Activated CD8-positive, alpha-beta memory T cell treated with anti-CD3 and anti-CD28 coated beads, Interleukin-2, amount 10 ng/mL, durations not matched to agents 7 days and 5 days (primary cell): ENCODE measurements at regions of chr2 and their contacts with region 1.

Region 1: DNA sequence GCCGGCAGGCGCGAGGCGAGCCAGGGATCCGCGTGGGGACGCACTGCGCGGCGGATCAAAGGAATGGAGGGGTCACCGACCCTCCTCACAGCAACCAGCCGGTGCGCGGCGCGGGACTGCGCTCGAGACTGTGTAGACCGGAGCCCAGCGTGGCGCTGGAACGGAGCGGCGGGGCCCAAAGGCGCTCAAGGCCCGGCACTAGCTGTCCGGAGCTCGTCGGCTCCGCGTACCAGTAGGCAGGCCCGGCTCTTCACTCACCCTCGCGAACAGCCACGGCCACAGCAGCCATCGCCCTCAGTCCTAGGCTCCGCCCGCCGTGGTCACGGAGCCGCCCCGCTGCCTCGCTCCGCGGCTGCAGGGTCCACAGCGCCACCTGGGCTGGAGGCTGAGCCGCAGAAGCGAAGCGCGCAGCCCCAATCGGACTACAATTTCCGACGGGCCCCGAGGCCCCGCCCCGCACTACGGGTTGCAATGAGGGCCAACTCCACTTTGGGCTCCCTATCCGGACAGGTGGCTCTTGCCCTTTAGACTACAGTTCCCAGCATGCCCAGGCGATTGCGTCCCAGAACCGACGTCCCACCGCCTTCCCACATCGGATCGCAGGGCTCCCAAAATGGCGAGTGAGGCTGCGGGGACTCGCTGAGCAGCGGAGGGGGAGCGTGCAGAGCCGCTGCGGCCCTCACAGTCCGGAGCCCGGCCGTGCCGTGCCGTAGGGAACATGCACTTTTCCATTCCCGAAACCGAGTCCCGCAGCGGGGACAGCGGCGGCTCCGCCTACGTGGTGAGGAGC is at the starts of genes EIF2B4 and SNX17:
- DNase-seq: peak; percentile 100
- ATAC-seq: peak; percentile 93
- H3K4me3 Mint-ChIP-seq: peak within 1 kb of the TSS; percentile 84
- H3K27ac Mint-ChIP-seq: peak within 1 kb of the TSS; percentile 96
- H3K4me1 Mint-ChIP-seq: peaks cover 37% of the 10 kb centered on the region
- H3K27me3 Mint-ChIP-seq: no peaks in the 10 kb centered on the region
- total RNA-seq, gene EIF2B4: 38.6 to 43.1 TPM
- total RNA-seq, gene SNX17: 101 to 125 TPM

Region 2: DNA sequence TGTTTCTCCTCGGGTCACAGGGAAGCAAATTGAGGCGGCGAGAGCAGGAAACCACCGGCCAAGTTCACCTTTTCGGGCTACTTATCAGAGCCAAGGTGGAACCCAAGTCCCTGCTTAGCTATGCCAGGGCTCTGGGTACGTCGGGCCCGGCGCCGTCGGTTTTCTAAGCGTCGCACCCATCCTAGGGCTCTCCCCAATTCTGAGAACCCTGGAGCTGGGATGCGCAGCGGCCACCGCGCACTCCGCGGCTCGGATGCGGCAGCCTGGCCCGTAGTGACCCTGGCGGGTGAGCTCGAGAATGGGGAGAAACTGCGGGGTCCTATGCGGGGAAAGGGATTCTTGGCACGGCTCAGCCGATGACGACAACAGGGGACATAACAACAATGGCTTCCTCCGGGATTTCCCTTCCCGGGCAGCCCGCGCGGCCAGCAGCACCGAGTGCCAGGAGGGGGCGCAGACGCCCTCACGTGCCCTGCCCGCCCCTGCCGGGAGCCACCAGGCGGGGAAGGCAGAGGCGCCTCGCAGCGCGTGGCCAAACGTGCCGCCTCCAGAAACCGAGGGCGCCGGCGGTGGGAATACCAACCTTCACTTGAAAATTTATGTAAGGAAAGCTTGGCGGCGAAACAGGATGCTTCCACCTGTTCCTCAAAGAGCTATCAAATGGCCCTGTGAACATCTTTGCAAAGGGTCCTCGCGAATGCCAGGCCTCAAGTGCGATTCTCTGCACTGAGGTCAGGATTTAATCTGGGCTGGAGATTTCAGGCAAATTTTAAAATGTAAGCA is 105.3 kb before region 1 on chr2:
- CTCF ChIA-PET with region 1: no interaction called
- DNase-seq: peak; percentile 57
- ATAC-seq: peak; percentile 14
- H3K4me3 Mint-ChIP-seq: peak overlapping the region; percentile 19
- H3K27ac Mint-ChIP-seq: no peak overlapping the region
- H3K4me1 Mint-ChIP-seq: peaks cover 22% of the 10 kb centered on the region
- H3K27me3 Mint-ChIP-seq: peaks cover 45% of the 10 kb centered on the region

Region 3: DNA sequence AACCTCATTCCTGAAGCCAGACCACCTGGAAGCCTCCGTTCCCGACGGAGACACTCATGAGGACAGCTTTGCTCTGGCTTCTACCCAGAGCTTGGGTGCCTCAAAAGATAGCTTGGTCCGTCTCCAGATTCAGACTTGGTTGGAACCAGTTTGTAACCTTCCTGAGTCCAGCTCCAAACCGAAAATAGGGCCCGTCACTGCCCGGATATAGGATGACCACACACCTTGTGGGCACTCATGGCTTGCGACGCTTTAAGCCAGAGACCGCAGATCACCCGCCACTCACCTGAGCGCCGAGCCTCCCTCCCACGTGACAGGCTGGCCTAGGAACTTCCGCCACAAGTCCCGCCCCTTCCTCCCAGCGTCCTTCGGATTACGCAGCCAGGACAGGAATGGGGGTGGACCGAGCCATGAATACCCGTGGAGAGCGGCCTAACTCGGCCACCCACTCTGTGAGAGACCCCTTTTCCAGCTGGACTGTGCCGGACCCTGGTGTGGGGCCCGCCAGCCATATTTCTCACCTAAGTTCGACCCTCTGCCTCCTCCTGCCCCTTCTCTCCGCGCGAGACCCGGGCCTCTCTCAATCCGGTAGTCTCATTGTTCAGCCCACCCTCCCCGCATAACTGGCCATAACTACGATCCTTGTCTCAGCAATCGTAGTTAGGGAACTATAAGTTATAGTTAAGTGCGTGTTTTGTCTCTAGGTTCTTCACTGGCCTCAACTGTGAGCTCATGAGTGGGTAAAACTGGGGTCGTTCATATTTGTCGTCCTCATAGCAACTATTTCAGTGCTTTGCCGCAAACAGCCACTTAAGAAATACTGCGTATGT is 47.2 kb before region 1 on chr2 and contains the start of gene MPV17:
- CTCF ChIA-PET with region 1: interaction called, 11 read pairs
- DNase-seq: peak; percentile 93
- ATAC-seq: peak; percentile 97
- H3K4me3 Mint-ChIP-seq: peak within 1 kb of the TSS; percentile 92
- H3K27ac Mint-ChIP-seq: peak within 1 kb of the TSS; percentile 92
- H3K4me1 Mint-ChIP-seq: peaks cover 19% of the 10 kb centered on the region
- H3K27me3 Mint-ChIP-seq: no peaks in the 10 kb centered on the region
- total RNA-seq, gene MPV17: 87.4 to 97.6 TPM

Region 4: GRCh38 chr2:27356382-27357181 is 13.6 kb before region 1 on chr2 and contains the start of gene GTF3C2:
- CTCF ChIA-PET with region 1: interaction called, 23 read pairs
- DNase-seq: peak; percentile 97
- ATAC-seq: peak; percentile 85
- H3K4me3 Mint-ChIP-seq: peak within 1 kb of the TSS; percentile 94
- H3K27ac Mint-ChIP-seq: peak within 1 kb of the TSS; percentile 99
- H3K4me1 Mint-ChIP-seq: peaks cover 47% of the 10 kb centered on the region
- H3K27me3 Mint-ChIP-seq: no peaks in the 10 kb centered on the region
- total RNA-seq, gene GTF3C2: 54.6 to 67.6 TPM

Region 5: DNA sequence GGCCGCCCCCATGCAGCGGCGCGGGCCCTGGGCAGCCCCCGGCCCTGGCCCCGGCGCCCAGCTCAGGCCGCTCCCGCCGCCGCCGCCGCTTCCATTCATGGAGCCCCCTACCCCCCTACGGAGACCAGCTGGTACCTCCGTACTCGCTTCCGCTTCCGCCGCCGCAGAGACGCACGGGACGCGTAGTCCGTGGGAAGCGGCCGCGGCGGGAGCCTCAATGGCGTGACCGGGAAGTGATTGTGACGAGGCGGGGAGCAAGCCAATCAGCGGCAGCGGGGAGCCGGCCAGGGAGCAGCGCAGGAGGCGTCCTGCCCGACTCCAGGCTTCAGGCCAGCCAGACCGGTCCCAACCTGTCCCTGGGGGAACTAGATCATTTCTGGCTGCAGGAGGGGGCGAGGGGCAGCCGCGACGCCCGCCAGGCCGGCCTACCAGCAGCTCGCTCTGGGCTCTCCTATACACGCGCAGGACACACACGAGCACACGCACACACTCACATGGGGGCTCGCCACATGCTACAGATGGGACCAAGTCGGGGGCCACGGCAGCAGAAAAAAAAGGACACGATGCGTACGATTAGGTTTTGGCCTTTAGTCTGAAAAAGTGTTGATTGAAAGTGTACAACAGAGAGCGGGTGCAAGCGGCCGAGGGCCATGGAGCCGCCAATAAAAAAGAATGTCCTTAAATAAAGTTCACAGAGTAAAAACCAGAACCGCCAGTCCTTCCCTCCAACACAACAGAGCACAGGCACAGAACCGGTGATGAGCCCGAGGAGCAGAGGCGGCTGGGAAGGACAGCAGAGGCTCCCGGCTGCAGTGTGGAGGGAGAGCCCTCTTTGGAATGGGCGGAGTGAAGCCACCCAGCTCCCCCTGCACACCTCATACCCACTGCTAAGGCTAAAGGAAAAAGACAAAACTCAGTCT is 10.7 kb after region 1 on chr2 and contains the start of gene ZNF513:
- CTCF ChIA-PET with region 1: interaction called, 20 read pairs
- DNase-seq: peak; percentile 93
- ATAC-seq: peak; percentile 91
- H3K4me3 Mint-ChIP-seq: peak within 1 kb of the TSS; percentile 84
- H3K27ac Mint-ChIP-seq: peak within 1 kb of the TSS; percentile 96
- H3K4me1 Mint-ChIP-seq: peaks cover 21% of the 10 kb centered on the region
- H3K27me3 Mint-ChIP-seq: no peaks in the 10 kb centered on the region
- total RNA-seq, gene ZNF513: 12.7 to 15.4 TPM

Region 6: GRCh38 chr2:27428213-27428977 is 58.2 kb after region 1 on chr2 and contains the start of gene NRBP1:
- CTCF ChIA-PET with region 1: interaction called, 10 read pairs
- DNase-seq: peak; percentile 94
- ATAC-seq: peak; percentile 89
- H3K4me3 Mint-ChIP-seq: peak within 1 kb of the TSS; percentile 96
- H3K27ac Mint-ChIP-seq: peak within 1 kb of the TSS; percentile 97
- H3K4me1 Mint-ChIP-seq: peaks cover 31% of the 10 kb centered on the region
- H3K27me3 Mint-ChIP-seq: peaks cover 3% of the 10 kb centered on the region
- total RNA-seq, gene NRBP1: 88.5 to 103 TPM

Region 7: GRCh38 chr2:27537287-27537686 is 167.1 kb after region 1 on chr2:
- CTCF ChIA-PET with region 1: no interaction called
- DNase-seq: no peak
- ATAC-seq: no peak
- H3K4me3 Mint-ChIP-seq: no peak overlapping the region
- H3K27ac Mint-ChIP-seq: no peak overlapping the region
- H3K4me1 Mint-ChIP-seq: no peaks in the 10 kb centered on the region
- H3K27me3 Mint-ChIP-seq: peaks cover 32% of the 10 kb centered on the region